Body of pancreas (tissue), 4 donors: ENCODE measurements at regions of chr16 and their contacts with region 1.

Region 1: GRCh38 chr16:89495121-89495520 is 4.8 kb upstream of the ANKRD11 start:
- DNase-seq: no peak
- ATAC-seq: no peak
- H3K4me3 ChIP-seq: no peak overlapping the region
- H3K27ac ChIP-seq: no peak overlapping the region
- H3K4me1 ChIP-seq: peaks cover 12% of the 10 kb centered on the region
- H3K27me3 ChIP-seq: no peaks in the 10 kb centered on the region
- CTCF ChIP-seq: no peak
- POLR2A ChIP-seq: no peak

Region 2: GRCh38 chr16:89334988-89335802 is 159.9 kb before region 1 on chr16:
- intact Hi-C with region 1: loop called (anchors 5 kb)
- DNase-seq: peak in 2 of 4 donors; percentile 6 to 13
- ATAC-seq: no peak
- H3K4me3 ChIP-seq: no peak overlapping the region
- H3K27ac ChIP-seq: no peak overlapping the region
- H3K4me1 ChIP-seq: peaks cover 40% of the 10 kb centered on the region
- H3K27me3 ChIP-seq: no peaks in the 10 kb centered on the region
- CTCF ChIP-seq: no peak
- POLR2A ChIP-seq: no peak